ENCODE measurements at regions of chr16 and their contacts with region 1.

Region 1: DNA sequence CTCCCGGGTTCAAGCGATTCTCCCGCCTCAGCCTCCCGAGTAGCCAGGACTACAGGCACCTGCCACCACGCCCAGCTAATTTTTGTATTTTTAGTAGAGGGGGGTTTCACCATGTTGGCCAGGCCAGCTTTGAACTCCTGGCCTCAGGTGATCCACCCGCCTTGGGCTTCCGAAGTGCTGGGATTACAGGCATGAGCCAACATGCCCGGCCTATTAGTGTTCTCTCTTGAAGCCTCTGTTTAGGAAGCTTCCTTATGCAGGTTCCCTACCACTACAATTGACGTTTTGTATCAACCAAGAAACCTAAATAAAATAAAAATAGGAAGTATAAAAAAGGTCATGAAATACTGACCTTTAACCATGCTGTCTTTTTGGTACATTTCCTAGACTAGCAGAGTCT is 16.0 kb downstream of the CHST5 start:
- DNase-seq: no peak
- H3K4me3 ChIP-seq: no peak overlapping the region
- H3K4me3 Mint-ChIP-seq: no peak overlapping the region
- H3K27ac ChIP-seq: no peak overlapping the region
- H3K27ac Mint-ChIP-seq: no peak overlapping the region
- H3K4me1 ChIP-seq: peaks cover 12% of the 10 kb centered on the region
- H3K4me1 Mint-ChIP-seq: peaks cover 8 to 22% (median 21%) of the 10 kb centered on the region in 3 donors
- H3K27me3 ChIP-seq: no peaks in the 10 kb centered on the region
- H3K27me3 Mint-ChIP-seq: no peaks in the 10 kb centered on the region

Region 2: GRCh38 chr16:75464130-75464918 is 55.6 kb before region 1 on chr16 and contains the start of gene TMEM170A:
- CTCF ChIA-PET with region 1: interaction called, 18 read pairs
- POLR2A ChIA-PET with region 1: interaction called, 3 read pairs
- DNase-seq: peak; percentile 98 to 99 (median 99)
- H3K4me3 ChIP-seq: peak within 1 kb of the TSS; percentile 91
- H3K4me3 Mint-ChIP-seq: peak within 1 kb of the TSS; percentile 88 to 98 (median 92)
- H3K27ac ChIP-seq: peak within 1 kb of the TSS; percentile 96
- H3K27ac Mint-ChIP-seq: peak within 1 kb of the TSS; percentile 93 to 99 (median 94)
- H3K4me1 ChIP-seq: peaks cover 30% of the 10 kb centered on the region
- H3K4me1 Mint-ChIP-seq: peaks cover 44 to 49% (median 48%) of the 10 kb centered on the region in 3 donors
- H3K27me3 ChIP-seq: no peaks in the 10 kb centered on the region
- H3K27me3 Mint-ChIP-seq: peaks cover 0 to 4% of the 10 kb centered on the region in 2 donors
- total RNA-seq, gene TMEM170A: 40.9 to 41.8 TPM

Region 3: DNA sequence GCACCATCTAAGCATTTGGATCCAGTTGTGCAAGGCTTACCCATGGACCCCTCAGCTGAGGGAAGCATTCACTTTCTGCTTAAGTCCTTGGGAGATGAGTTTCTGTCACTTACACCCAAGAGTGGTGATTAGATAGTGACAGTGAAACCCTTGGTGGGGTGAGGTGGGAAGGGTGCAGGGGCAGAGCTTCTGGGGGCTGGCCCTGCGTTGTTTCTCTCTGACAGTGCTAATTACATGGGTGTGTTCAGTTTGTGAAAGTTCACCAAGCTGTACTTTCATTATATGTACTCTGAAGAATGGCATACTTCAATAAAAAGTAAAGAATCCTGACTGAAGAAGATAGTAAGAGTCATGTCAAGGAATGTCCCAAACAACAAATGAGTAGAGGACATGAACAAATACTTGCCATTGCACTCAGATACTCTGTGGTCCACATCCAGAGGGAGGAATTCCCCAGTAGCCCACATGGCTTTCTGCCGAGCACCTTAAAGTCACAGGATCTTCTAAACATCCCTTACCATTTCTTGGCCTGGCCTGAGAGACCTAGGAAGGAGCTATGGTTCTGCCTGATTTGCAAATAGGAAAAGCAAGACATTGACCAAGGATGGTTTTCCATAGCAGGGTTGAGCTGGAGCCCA is 33.1 kb before region 1 on chr16:
- CTCF ChIA-PET with region 1: no interaction called
- POLR2A ChIA-PET with region 1: no interaction called
- DNase-seq: no peak
- H3K4me3 ChIP-seq: no peak overlapping the region
- H3K4me3 Mint-ChIP-seq: no peak overlapping the region
- H3K27ac ChIP-seq: no peak overlapping the region
- H3K27ac Mint-ChIP-seq: no peak overlapping the region
- H3K4me1 ChIP-seq: no peaks in the 10 kb centered on the region
- H3K4me1 Mint-ChIP-seq: no peaks in the 10 kb centered on the region
- H3K27me3 ChIP-seq: peaks cover 4% of the 10 kb centered on the region
- H3K27me3 Mint-ChIP-seq: peaks cover 11 to 28% of the 10 kb centered on the region in 2 donors

Region 4: DNA sequence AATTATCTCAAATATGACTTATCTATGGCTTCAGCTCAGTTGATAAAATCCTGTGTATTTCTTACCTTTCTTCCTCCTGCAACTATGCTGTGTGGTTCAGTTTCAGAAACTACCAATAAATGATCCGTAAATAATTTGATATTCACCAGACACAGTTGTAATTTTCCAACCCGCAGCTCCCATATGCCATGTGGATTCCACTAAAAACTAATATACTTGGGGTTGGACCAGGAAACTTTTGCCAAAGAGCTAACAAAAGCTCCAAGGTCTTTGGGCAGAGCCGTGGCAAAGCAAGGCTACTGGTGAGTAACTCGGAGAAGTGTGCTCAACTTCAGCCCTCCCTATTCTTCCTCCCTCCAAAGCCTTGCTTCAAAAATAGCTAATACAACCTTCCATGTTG is 22.3 kb before region 1 on chr16:
- CTCF ChIA-PET with region 1: interaction called, 14 read pairs
- POLR2A ChIA-PET with region 1: no interaction called
- DNase-seq: no peak
- H3K4me3 ChIP-seq: no peak overlapping the region
- H3K4me3 Mint-ChIP-seq: no peak overlapping the region
- H3K27ac ChIP-seq: no peak overlapping the region
- H3K27ac Mint-ChIP-seq: no peak overlapping the region
- H3K4me1 ChIP-seq: peaks cover 6% of the 10 kb centered on the region
- H3K4me1 Mint-ChIP-seq: peaks cover 7 to 9% (median 8%) of the 10 kb centered on the region in 3 donors
- H3K27me3 ChIP-seq: peaks cover 11% of the 10 kb centered on the region
- H3K27me3 Mint-ChIP-seq: peaks cover 18 to 31% of the 10 kb centered on the region in 2 donors

Region 5: DNA sequence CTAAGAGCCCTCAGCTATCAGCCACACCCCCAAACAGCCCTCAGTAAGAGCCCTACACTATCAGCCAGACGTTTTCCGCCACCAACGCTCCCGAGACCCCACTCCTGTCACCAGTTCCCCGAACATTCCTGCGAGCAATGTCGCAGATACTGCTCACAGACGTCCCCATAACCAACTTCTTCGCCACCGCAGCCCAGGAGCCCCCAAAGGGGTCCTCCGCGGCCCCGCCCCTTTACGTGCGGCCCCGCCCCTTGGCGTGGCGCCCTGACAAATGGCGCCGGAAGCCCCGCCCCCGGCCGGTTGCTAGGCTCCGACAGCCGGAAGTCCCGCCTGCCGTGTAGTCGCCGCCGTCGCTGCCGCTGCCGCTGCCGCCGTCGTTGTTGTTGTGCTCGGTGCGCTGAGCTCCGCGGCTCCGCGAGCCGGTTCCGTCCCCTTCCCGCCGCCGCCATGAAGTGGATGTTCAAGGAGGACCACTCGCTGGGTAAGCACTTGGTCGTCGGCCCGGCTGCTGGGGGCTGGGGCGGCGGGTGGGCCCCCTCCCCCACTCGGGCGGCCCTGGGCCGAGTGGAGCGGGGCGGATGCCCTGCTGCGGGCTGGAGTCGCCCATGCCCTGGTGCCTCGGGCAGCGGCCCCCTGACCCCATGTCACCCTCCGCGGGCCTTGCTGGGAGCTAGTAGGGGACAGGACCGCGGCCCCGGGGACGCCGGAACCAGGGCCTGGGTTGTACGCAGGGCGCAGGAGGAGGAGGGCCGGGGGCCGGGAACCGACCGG is 46.3 kb after region 1 on chr16 and contains the start of gene GABARAPL2:
- CTCF ChIA-PET with region 1: interaction called, 12 read pairs
- POLR2A ChIA-PET with region 1: interaction called, 13 read pairs
- DNase-seq: peak; percentile 89 to 94 (median 91)
- H3K4me3 ChIP-seq: peak within 1 kb of the TSS; percentile 85
- H3K4me3 Mint-ChIP-seq: peak within 1 kb of the TSS; percentile 92 to 100 (median 96)
- H3K27ac ChIP-seq: peak within 1 kb of the TSS; percentile 83
- H3K27ac Mint-ChIP-seq: peak within 1 kb of the TSS; percentile 89 to 100 (median 98)
- H3K4me1 ChIP-seq: peaks cover 36% of the 10 kb centered on the region
- H3K4me1 Mint-ChIP-seq: peaks cover 43 to 58% (median 54%) of the 10 kb centered on the region in 3 donors
- H3K27me3 ChIP-seq: no peaks in the 10 kb centered on the region
- H3K27me3 Mint-ChIP-seq: peaks cover 7 to 14% of the 10 kb centered on the region in 2 donors
- total RNA-seq, gene GABARAPL2: 61.7 to 66.2 TPM

Region 6: DNA sequence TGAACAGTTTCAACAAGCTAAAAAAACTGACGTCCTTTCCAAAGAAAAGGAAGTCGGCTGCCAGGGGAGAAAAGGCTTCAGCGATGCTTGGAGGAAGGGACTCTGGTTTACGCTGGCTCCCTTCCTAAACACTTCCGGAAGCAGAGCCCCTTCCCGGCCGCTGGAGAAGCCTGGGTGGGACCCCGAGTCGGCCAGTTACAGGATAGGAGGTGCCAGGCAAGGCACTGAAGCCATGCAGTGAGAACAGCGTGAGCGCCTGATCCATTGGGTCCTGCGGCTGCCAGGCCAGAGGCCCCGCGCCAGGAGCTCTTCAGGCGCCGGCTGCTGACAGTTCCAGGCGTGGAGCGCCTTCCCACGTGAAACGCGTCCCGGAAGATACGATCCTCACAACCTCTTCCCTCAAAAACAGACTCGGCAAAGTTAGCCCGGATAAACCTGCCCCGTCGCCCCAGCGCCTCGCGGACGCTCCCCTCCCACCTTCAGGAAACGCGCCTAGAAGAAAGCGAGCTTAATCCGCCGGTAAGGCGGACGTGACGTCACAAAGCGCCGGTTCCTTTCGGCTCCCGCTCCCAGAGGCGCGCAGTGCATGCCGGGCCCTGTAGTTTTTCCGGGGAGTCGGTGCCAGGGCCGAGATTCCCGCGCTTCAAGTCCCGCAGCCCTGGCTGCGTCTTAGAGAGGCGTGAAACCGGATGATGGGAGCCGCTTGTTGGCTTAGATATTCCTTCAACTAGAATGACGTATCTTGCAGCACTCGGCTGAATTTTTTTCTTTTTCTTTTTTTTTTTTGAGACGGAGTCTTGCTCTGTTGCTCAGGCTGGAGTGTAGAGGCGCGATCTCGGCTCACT is 103.1 kb after region 1 on chr16 and contains the start of gene ADAT1:
- CTCF ChIA-PET with region 1: interaction called, 42 read pairs
- POLR2A ChIA-PET with region 1: interaction called, 16 read pairs
- DNase-seq: peak; percentile 96 to 99 (median 98)
- H3K4me3 ChIP-seq: peak within 1 kb of the TSS; percentile 75
- H3K4me3 Mint-ChIP-seq: peak within 1 kb of the TSS; percentile 95 to 99 (median 96)
- H3K27ac ChIP-seq: peak within 1 kb of the TSS; percentile 96
- H3K27ac Mint-ChIP-seq: peak within 1 kb of the TSS; percentile 95 to 100 (median 98)
- H3K4me1 ChIP-seq: peaks cover 60% of the 10 kb centered on the region
- H3K4me1 Mint-ChIP-seq: peaks cover 64 to 86% (median 78%) of the 10 kb centered on the region in 3 donors
- H3K27me3 ChIP-seq: no peaks in the 10 kb centered on the region
- H3K27me3 Mint-ChIP-seq: no peaks in the 10 kb centered on the region
- total RNA-seq, gene ADAT1: 57.9 to 59.8 TPM

Region 7: GRCh38 chr16:75653922-75654321 is 134.0 kb after region 1 on chr16:
- CTCF ChIA-PET with region 1: interaction called, 36 read pairs
- POLR2A ChIA-PET with region 1: interaction called, 22 read pairs
- DNase-seq: no peak
- H3K4me3 ChIP-seq: no peak overlapping the region
- H3K4me3 Mint-ChIP-seq: peak overlapping the region in 5 of 7 donors; percentile 43 to 99 (median 65)
- H3K27ac ChIP-seq: no peak overlapping the region
- H3K27ac Mint-ChIP-seq: peak overlapping the region; percentile 74 to 97 (median 83)
- H3K4me1 ChIP-seq: peaks cover 38% of the 10 kb centered on the region
- H3K4me1 Mint-ChIP-seq: peaks cover 56 to 84% (median 81%) of the 10 kb centered on the region in 3 donors
- H3K27me3 ChIP-seq: no peaks in the 10 kb centered on the region
- H3K27me3 Mint-ChIP-seq: no peaks in the 10 kb centered on the region